GM10248 (cell line): ENCODE measurements at regions of chr3 and their contacts with region 1.

Region 1: GRCh38 chr3:119579366-119580165 is at the start of gene ADPRH:
- DNase-seq: peak; percentile 83
- CTCF ChIP-seq: no peak

Region 2: DNA sequence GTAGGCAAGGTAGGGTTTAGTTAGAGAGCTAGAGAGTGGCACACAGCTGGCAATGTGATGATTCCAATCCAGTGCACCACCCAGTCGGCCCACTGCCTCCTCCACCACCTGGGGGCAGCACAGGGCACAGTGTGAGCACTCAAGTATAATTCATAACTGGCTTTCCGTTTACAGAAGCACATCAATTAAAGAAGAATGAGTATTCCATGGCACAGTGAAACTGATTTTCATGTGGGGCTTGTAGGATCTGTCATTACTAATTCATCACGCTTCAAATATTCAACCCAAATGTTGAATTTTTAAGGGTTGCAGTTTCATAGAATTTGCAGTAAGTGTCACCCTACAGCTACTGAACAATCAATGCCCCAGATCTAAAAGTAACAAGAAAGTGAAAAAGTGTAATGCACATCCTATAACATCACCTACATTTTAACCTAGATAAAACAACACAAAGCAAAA is 694.8 kb before region 1 on chr3:
- CTCF ChIA-PET with region 1: no interaction called
- POLR2A ChIA-PET with region 1: no interaction called
- DNase-seq: peak; percentile 32
- CTCF ChIP-seq: peak; percentile 88

Region 3: GRCh38 chr3:119559441-119559963 is 20.1 kb before region 1 on chr3 and contains the start of gene CD80:
- CTCF ChIA-PET with region 1: interaction called, 21 read pairs
- POLR2A ChIA-PET with region 1: interaction called, 15 read pairs
- DNase-seq: peak; percentile 65
- CTCF ChIP-seq: peak; percentile 67

Region 4: DNA sequence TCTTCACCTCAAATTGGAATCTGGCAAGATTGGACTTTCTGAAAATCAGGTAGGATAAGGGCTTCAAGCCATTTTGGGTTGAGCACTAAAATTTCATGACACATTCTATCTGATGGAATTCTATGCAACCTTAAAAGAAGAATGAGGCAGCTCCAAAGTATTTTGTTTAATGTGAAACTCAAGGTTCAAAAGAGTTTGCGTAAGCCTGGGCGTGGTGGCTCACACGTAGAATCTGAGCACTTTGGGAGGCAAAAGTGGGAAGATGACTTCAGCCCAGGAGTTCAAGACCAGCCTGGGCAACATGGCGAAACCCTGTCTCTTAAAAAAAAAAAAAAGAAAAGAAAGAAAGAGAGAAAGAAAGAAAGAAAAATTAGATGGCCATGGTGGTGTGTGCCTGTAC is 14.5 kb after region 1 on chr3:
- CTCF ChIA-PET with region 1: interaction called, 58 read pairs
- POLR2A ChIA-PET with region 1: interaction called, 5 read pairs
- DNase-seq: no peak
- CTCF ChIP-seq: no peak